ENCODE measurements at regions of chr3 and their contacts with region 1.

Region 1: GRCh38 chr3:184229394-184230080 is at the start of gene VWA5B2:
- DNase-seq: peak; percentile 73
- H3K4me3 Mint-ChIP-seq: peak within 1 kb of the TSS; percentile 49
- H3K27ac Mint-ChIP-seq: no peak within 1 kb of the TSS
- H3K4me1 Mint-ChIP-seq: peaks cover 9% of the 10 kb centered on the region
- H3K27me3 Mint-ChIP-seq: peaks cover 45% of the 10 kb centered on the region
- total RNA-seq, gene VWA5B2: not detected

Region 2: DNA sequence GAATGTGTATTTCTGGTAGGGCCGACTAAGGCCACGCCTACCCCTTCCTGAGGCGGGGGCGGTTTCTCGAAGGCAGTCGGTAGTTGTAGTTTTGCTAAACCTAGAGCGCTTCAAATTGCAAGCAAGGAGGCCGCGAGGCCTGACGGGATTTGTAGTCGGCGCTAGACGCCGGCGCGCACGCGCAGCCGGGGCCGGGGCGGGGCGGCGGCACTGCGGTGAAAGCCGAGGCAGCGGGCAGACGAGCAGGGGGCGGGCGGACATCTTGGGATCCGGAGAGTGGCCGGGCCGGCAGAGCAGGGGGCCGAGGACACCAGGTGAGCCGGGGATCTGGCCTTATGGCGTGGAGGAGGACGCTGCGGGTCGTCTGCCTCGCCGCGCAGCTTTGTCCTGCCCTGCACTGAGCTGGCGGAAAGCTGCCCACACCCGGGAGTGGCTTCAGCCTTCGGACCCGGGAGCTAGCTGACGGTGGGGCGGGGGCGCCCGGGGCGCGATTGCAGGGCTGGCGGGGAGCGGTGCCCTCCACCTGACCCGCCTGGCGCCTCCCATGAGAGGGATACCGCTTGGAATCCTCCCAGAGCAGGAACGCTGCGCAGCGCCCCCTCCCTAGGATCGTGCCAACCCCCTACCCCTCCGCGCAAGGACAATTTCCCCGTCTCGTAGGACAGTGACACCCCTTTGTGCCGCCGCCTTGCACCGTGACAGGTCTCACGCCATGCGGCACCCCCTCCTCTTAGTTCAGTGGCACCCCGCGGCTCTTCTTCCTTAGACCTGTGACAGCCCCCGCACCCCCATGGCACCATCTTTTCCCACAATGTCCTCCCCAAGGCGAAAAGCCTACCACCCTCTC is 54.7 kb before region 1 on chr3 and contains the start of gene AP2M1:
- CTCF ChIA-PET with region 1: interaction called, 12 read pairs
- POLR2A ChIA-PET with region 1: no interaction called
- intact Hi-C with region 1: no loop called
- DNase-seq: peak; percentile 99
- H3K4me3 Mint-ChIP-seq: peak within 1 kb of the TSS; percentile 98
- H3K27ac Mint-ChIP-seq: peak within 1 kb of the TSS; percentile 67
- H3K4me1 Mint-ChIP-seq: peaks cover 25% of the 10 kb centered on the region
- H3K27me3 Mint-ChIP-seq: no peaks in the 10 kb centered on the region
- total RNA-seq, gene AP2M1: 218 to 221 TPM

Region 3: GRCh38 chr3:184209146-184209923 is 20.2 kb before region 1 on chr3:
- CTCF ChIA-PET with region 1: interaction called, 13 read pairs
- POLR2A ChIA-PET with region 1: no interaction called
- intact Hi-C with region 1: no loop called
- DNase-seq: no peak
- H3K4me3 Mint-ChIP-seq: no peak overlapping the region
- H3K27ac Mint-ChIP-seq: no peak overlapping the region
- H3K4me1 Mint-ChIP-seq: no peaks in the 10 kb centered on the region
- H3K27me3 Mint-ChIP-seq: peaks cover 10% of the 10 kb centered on the region

Region 4: DNA sequence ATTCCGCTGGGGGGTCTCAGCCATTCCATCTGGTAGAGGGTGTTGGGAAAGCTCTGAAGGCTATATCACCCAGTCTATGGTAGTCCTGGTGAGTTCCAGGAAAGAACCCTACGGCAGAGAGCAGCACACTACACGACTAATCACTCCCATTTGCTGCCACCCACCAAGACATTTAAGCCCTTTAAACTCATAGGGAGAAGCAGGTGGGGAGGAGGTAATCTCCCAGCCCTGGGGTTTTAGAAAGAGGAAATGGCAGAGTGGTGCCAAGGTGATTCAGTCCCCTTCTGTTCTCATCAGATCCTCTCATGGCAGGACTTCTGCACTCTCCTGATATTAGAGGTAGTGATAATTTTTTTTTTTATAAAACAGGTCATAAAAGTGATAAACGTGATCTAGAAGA is 10.7 kb before region 1 on chr3:
- CTCF ChIA-PET with region 1: interaction called, 26 read pairs
- POLR2A ChIA-PET with region 1: no interaction called
- intact Hi-C with region 1: no loop called
- DNase-seq: no peak
- H3K4me3 Mint-ChIP-seq: no peak overlapping the region
- H3K27ac Mint-ChIP-seq: no peak overlapping the region
- H3K4me1 Mint-ChIP-seq: no peaks in the 10 kb centered on the region
- H3K27me3 Mint-ChIP-seq: peaks cover 7% of the 10 kb centered on the region

Region 5: DNA sequence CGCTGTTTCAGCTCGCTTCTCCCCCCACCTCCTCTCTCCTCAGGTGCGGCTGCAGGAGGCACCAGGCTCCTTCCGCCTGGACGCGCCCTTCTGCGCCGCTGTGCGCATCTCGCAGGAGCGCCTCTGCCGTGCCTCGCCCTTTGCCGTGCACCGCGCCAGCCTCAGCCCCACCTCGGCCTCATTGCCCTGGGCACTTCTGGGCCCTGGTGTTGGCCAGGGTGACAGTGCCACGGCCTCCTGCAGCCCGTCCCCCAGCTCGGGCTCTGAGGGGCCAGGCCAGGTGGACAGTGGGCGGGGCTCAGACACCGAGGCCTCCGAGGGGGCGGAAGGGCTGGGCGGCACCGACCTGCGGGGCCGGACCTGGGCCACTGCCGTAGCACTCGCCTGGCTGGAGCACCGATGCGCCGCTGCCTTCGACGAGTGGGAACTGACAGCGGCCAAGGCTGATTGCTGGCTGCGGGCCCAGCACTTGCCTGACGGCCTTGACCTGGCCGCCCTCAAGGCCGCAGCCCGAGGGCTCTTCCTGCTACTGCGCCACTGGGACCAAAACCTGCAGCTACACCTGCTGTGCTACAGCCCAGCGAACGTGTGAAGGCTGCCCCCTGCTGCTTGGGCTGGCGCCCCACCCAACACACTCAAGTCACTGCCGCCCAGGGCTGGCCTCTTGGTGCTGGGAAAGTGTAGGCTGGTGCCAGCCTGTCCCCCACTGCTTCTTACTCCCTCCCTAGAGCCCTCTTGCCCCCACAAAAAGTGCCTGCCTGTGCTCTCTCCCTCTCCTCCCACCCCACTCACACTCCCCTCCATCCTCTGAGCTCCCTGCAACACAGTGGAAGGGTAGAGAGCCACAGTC is 12.1 kb after region 1 on chr3:
- CTCF ChIA-PET with region 1: interaction called, 50 read pairs
- POLR2A ChIA-PET with region 1: interaction called, 6 read pairs
- intact Hi-C with region 1: no loop called
- DNase-seq: peak; percentile 20
- H3K4me3 Mint-ChIP-seq: no peak overlapping the region
- H3K27ac Mint-ChIP-seq: no peak overlapping the region
- H3K4me1 Mint-ChIP-seq: no peaks in the 10 kb centered on the region
- H3K27me3 Mint-ChIP-seq: no peaks in the 10 kb centered on the region

Region 6: GRCh38 chr3:184261270-184261853 is 31.8 kb after region 1 on chr3 and contains the start of gene CAMK2N2:
- CTCF ChIA-PET with region 1: interaction called, 94 read pairs
- POLR2A ChIA-PET with region 1: no interaction called
- intact Hi-C with region 1: no loop called
- DNase-seq: peak; percentile 65
- H3K4me3 Mint-ChIP-seq: peak within 1 kb of the TSS; percentile 79
- H3K27ac Mint-ChIP-seq: peak within 1 kb of the TSS; percentile 25
- H3K4me1 Mint-ChIP-seq: peaks cover 20% of the 10 kb centered on the region
- H3K27me3 Mint-ChIP-seq: peaks cover 22% of the 10 kb centered on the region
- total RNA-seq, gene CAMK2N2: 0.21 to 0.51 TPM

Region 7: GRCh38 chr3:184289426-184289938 is 59.9 kb after region 1 on chr3:
- CTCF ChIA-PET with region 1: interaction called, 53 read pairs
- POLR2A ChIA-PET with region 1: no interaction called
- intact Hi-C with region 1: loop called (anchors 1 kb)
- DNase-seq: peak; percentile 81
- H3K4me3 Mint-ChIP-seq: no peak overlapping the region
- H3K27ac Mint-ChIP-seq: no peak overlapping the region
- H3K4me1 Mint-ChIP-seq: peaks cover 2% of the 10 kb centered on the region
- H3K27me3 Mint-ChIP-seq: peaks cover 5% of the 10 kb centered on the region

Region 8: DNA sequence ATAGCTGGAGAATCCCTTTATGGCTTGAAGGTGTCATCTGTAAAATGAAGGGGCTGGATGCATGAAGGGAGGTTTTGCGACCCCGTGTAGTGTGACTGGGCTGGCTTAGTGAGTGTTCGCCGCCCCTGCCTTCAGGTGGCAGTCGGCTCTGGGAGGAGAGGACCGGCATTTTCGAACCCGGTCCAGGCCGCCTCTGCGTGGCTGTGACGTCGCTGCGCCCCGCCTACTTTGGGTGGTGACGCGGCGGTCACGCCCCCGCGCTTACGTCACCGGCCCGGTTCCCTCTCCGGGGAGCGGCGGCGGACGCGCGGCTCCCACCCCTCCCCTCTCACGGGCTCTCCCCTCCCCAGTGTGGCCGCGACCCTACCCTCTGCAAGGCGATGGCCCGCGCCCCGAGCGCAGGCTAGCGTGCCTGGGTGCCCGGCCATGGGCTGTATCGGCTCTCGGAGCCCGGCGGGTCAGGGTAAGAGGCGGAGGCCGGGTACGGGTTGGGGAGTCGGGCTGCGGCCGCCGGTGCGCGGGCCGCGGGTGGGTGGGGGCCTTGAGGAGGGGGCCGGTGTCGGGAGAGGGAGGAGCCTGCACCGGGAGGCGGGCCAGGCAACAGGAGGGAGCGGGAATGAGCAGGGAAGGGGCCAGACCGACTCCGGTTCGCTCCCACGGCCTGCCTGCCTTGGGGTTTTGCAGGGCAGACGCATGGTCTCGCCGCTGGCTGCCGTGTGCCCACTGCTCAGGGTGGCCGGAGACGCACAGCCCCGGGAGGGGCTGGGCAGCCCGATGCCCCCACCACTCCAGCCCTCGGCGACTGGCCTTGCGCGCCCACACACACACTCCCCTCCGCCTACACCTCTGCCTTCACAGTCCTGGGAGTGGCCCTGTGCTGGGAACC is 106.4 kb after region 1 on chr3:
- CTCF ChIA-PET with region 1: no interaction called
- POLR2A ChIA-PET with region 1: no interaction called
- intact Hi-C with region 1: no loop called
- DNase-seq: peak; percentile 89
- H3K4me3 Mint-ChIP-seq: peak overlapping the region; percentile 81
- H3K27ac Mint-ChIP-seq: peak overlapping the region; percentile 88
- H3K4me1 Mint-ChIP-seq: peaks cover 54% of the 10 kb centered on the region
- H3K27me3 Mint-ChIP-seq: no peaks in the 10 kb centered on the region

Measured in activated CD4-positive, alpha-beta memory T cell treated with anti-CD3 and anti-CD28 coated beads for 36 hours (primary cell).